Activated CD4-positive, alpha-beta T cell treated with anti-CD3 and anti-CD28 coated beads for 36 hours (primary cell): ENCODE measurements at regions of chr6 and their contacts with region 1.

Region 1: GRCh38 chr6:128520436-128521281 is at the start of gene PTPRK:
- DNase-seq: peak; percentile 94
- ATAC-seq: peak; percentile 92
- H3K4me3 Mint-ChIP-seq: peak within 1 kb of the TSS; percentile 90
- H3K27ac Mint-ChIP-seq: peak within 1 kb of the TSS; percentile 66
- H3K4me1 Mint-ChIP-seq: peaks cover 18% of the 10 kb centered on the region
- H3K27me3 Mint-ChIP-seq: peaks cover 31% of the 10 kb centered on the region
- total RNA-seq, gene PTPRK: 4.1 to 5.0 TPM

Region 2: DNA sequence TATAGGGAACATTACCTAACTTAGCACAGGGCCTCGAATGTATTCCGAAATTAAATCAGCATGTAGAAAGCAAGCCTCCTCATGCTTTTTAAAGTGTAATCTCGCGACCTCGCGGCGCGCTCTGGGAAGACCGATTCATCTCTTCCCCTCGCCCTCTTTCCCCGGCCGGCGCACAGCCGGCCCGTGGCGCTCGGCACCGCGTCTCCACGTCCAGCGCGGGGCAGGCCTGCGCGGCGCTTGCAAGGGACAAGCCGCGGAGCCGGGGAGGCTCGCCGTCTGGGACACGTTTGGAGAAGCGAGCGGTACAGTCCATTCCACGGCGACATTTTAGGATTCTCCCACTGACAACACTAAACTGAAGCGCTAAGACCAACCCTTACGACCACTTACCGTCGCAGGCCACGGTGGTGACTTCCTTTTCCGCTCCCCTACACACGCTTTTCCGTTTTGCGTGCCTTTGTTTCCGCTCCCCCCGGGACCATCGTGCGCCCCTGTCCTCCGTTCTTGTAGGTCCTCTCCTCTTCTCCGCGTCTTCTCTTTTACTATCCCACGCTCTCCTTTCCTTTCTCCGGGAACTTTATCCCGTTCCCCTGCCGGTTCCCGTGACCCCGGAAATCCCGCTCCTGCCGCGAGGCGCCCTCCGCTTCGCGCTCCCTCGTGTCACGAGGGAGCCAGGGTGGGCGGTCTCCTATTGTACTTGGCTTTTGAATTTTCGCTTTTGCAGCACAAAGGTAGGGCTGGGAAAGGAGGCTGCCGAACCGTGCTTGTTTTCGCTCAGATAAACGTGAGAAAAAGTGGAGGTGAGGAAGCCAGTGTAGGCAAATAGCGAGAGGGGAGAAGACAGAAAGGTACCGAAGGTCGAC is 1177.5 kb before region 1 on chr6 and contains the start of gene ECHDC1:
- CTCF ChIA-PET with region 1: no interaction called
- POLR2A ChIA-PET with region 1: no interaction called
- intact Hi-C with region 1: loop called in 1 of 2 experiments (anchors 2 kb)
- DNase-seq: peak; percentile 85
- ATAC-seq: peak; percentile 85
- H3K4me3 Mint-ChIP-seq: no peak within 1 kb of the TSS
- H3K27ac Mint-ChIP-seq: no peak within 1 kb of the TSS
- H3K4me1 Mint-ChIP-seq: peaks cover 19% of the 10 kb centered on the region
- H3K27me3 Mint-ChIP-seq: no peaks in the 10 kb centered on the region
- total RNA-seq, gene ECHDC1: 31.1 to 48.2 TPM

Region 3: GRCh38 chr6:127900935-127901334 is 619.7 kb before region 1 on chr6 and contains the start of gene THEMIS:
- CTCF ChIA-PET with region 1: no interaction called
- POLR2A ChIA-PET with region 1: no interaction called
- intact Hi-C with region 1: loop called in 1 of 2 experiments (anchors 5 kb)
- DNase-seq: peak; percentile 64
- ATAC-seq: peak; percentile 67
- H3K4me3 Mint-ChIP-seq: peak within 1 kb of the TSS; percentile 91
- H3K27ac Mint-ChIP-seq: peak within 1 kb of the TSS; percentile 97
- H3K4me1 Mint-ChIP-seq: peaks cover 66% of the 10 kb centered on the region
- H3K27me3 Mint-ChIP-seq: no peaks in the 10 kb centered on the region
- total RNA-seq, gene THEMIS: 22.9 to 24.5 TPM

Region 4: GRCh38 chr6:128655978-128656498 is 135.4 kb after region 1 on chr6:
- CTCF ChIA-PET with region 1: interaction called, 4 read pairs
- POLR2A ChIA-PET with region 1: no interaction called
- intact Hi-C with region 1: loop called in 1 of 2 experiments (anchors 2 kb)
- DNase-seq: peak; percentile 27
- ATAC-seq: peak; percentile 96
- H3K4me3 Mint-ChIP-seq: peak overlapping the region; percentile 12
- H3K27ac Mint-ChIP-seq: peak overlapping the region; percentile 89
- H3K4me1 Mint-ChIP-seq: peaks cover 38% of the 10 kb centered on the region
- H3K27me3 Mint-ChIP-seq: peaks cover 10% of the 10 kb centered on the region

Region 5: GRCh38 chr6:128731249-128732165 is 210.8 kb after region 1 on chr6:
- CTCF ChIA-PET with region 1: no interaction called
- POLR2A ChIA-PET with region 1: no interaction called
- intact Hi-C with region 1: loop called (anchors 5 to 10 kb)
- DNase-seq: peak; percentile 5
- ATAC-seq: no peak
- H3K4me3 Mint-ChIP-seq: no peak overlapping the region
- H3K27ac Mint-ChIP-seq: no peak overlapping the region
- H3K4me1 Mint-ChIP-seq: no peaks in the 10 kb centered on the region
- H3K27me3 Mint-ChIP-seq: peaks cover 18% of the 10 kb centered on the region